Activated B cell treated with CpG ODN at 0.5 μM for 24 hours (primary cell): ENCODE measurements at regions of chr1 and their contacts with region 1.

Region 1: DNA sequence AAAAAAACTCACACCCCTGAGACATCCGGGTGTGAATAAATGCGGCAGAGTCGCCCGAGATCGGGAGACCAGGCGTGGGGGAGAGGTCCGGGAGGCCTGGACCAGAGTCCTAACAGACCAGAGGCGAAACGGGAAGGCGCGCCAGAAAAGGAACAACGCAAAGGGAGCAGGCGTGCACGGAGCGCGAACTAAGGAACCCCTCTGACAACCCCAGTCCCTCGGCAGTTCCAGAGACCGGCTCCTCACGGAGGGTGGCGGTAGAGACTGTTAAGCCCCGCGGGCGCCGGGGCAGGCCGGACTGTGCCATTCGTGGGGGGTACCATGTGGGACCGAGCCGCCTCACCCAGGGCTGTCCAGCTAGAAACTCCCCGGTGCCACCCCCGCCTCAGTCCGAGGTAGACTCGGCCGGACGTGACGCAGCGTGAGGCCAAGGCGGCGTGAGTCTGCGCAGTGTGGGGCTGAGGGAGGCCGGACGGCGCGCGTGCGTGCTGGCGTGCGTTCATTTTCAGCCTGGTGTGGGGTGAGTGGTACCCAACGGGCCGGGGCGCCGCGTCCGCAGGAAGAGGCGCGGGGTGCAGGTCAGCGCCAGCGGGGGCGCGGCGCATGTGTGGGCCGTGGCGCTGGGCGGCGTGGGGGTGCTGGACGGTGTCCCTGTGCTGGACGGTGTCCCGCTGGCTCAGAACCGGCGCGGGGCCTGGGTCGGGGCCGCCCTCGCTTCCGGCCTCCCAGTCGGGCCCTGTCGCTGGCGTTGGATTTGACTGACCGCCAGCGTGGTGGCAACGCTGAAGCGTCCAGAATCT is at the start of gene PARK7:
- DNase-seq: peak; percentile 100
- ATAC-seq: peak; percentile 97
- H3K4me3 Mint-ChIP-seq: peak within 1 kb of the TSS; percentile 94
- H3K27ac Mint-ChIP-seq: peak within 1 kb of the TSS; percentile 97
- H3K4me1 Mint-ChIP-seq: peaks cover 55% of the 10 kb centered on the region
- H3K27me3 Mint-ChIP-seq: no peaks in the 10 kb centered on the region
- CTCF ChIP-seq: no peak
- total RNA-seq, gene PARK7: 242 and 281 TPM in 2 replicates

Region 2: DNA sequence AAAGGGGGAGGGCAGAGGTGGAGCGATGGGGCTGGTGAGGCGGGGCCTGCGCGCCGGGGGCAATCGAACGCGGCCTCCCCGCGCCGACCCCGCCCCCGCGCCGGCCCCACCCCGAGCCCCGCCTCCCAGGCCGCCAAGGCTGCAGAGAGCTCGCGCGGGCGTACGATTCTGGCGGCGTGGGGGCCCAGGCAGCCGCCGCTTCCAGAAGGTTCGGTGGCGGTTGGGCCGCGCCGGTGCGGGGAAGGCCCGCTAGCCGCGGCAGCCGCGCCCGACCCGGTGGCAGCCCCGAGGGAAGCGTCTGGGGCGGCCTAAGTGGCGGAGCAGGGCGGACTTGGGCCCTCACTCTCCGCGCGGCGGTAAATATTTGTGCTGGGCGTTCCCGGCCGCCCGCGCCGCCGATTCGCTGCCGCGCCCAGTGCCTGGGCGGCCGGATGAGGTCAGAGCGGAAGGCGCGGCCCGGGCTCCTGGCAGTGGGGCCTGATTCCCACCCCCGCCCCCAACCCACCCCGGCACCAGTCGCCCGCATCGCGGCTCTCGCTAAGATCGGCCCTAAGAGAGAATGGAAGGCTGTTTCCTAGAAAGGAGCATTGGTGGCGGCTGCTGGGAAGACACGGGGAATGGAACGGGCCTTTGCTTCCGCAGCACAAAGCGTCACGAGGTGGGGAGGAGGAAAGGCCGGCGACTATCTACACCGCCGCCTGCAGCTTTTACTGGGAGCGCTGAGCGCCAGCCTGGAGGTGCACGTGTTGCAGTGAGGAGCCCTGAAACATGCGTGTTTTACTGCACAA is 1567.8 kb before region 1 on chr1 and contains the start of gene ACOT7:
- CTCF ChIA-PET with region 1: no interaction called
- POLR2A ChIA-PET with region 1: no interaction called
- intact Hi-C with region 1: loop called (anchors 5 kb)
- DNase-seq: peak; percentile 86
- ATAC-seq: peak; percentile 91
- H3K4me3 Mint-ChIP-seq: peak within 1 kb of the TSS; percentile 87
- H3K27ac Mint-ChIP-seq: peak within 1 kb of the TSS; percentile 93
- H3K4me1 Mint-ChIP-seq: peaks cover 22% of the 10 kb centered on the region
- H3K27me3 Mint-ChIP-seq: no peaks in the 10 kb centered on the region
- CTCF ChIP-seq: no peak
- total RNA-seq, gene ACOT7: 12.3 and 12.7 TPM in 2 replicates

Region 3: DNA sequence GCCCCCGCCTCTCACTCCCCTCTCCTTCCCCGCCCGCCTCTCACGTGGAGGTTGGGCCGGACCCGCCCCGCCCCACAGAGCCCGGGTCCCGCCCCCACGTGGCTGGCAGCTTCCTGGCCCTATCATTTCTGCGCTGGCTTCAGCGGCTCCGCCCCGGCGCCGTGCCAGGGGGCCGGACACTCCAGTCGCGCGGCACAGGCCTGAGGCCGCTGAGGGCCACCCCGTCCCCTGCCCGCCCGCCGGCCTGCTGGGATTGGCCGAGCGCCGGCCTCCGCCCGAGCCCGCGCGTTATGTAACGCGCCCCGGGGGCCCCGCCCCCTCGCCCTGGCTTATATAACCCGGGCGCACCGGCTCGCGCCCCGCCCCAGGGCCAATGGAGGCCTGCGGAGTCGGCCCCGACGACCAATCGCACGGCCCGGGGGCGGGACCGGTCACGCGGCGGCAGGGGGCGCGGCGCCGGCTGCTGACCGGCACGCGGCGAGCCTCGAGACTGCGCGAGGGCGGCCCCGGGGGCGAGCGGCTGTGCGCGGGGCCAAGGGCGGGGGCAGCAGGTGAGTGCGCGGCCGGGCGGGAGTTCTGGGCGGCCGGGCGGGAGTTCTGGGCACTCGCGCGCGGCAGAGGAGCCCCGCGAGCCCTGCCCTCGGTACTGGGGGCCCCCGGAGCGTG is 177.5 kb before region 1 on chr1 and contains the start of gene PER3:
- CTCF ChIA-PET with region 1: no interaction called
- POLR2A ChIA-PET with region 1: interaction called, 3 read pairs
- intact Hi-C with region 1: loop called (anchors 5 kb)
- DNase-seq: peak; percentile 95
- ATAC-seq: peak; percentile 92
- H3K4me3 Mint-ChIP-seq: peak within 1 kb of the TSS; percentile 80
- H3K27ac Mint-ChIP-seq: no peak within 1 kb of the TSS
- H3K4me1 Mint-ChIP-seq: peaks cover 26% of the 10 kb centered on the region
- H3K27me3 Mint-ChIP-seq: no peaks in the 10 kb centered on the region
- CTCF ChIP-seq: no peak
- total RNA-seq, gene PER3: 2.7 and 3.3 TPM in 2 replicates

Region 4: GRCh38 chr1:7902478-7903085 is 58.8 kb before region 1 on chr1:
- CTCF ChIA-PET with region 1: no interaction called
- POLR2A ChIA-PET with region 1: no interaction called
- intact Hi-C with region 1: no loop called
- DNase-seq: peak; percentile 42
- ATAC-seq: peak; percentile 82
- H3K4me3 Mint-ChIP-seq: peak overlapping the region; percentile 56
- H3K27ac Mint-ChIP-seq: no peak overlapping the region
- H3K4me1 Mint-ChIP-seq: peaks cover 4% of the 10 kb centered on the region
- H3K27me3 Mint-ChIP-seq: no peaks in the 10 kb centered on the region
- CTCF ChIP-seq: peak; percentile 54

Region 5: DNA sequence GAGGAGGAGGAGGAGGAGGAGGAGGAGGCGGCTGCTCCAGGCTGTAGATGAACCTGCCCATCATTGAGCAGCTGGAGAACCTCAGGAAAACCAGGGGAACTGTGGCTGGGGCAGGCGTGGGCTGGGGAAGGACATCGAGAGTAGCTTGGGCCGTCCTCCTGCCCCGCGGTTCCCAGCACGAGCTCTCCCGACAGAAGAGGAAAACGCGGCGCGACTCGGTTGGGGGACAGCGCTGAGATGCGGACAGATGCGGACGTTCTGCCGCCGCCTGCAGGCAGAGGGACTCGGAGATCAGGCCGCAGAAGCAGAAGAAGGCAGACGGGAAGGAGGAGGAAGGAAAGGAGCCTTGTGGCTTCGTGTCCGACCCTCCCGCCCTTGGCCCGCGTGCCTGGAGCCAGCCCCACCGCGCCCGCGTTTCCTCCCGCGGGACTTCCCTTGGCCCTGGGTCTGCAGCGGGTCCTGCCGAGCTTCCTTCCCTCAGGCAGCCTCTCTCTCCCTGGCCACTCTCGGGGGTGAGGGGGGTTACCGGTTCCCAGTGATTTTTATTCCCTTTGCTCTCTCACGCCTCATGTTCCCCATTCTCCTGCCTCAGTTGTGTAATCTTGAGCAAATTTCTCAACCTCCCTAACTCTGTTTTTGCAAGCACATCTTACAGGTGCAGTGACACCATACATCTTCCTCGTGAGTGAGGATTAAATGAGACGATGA is 19.0 kb before region 1 on chr1:
- CTCF ChIA-PET with region 1: no interaction called
- POLR2A ChIA-PET with region 1: interaction called, 16 read pairs
- intact Hi-C with region 1: loop called (anchors 1 kb)
- DNase-seq: peak; percentile 34
- ATAC-seq: peak; percentile 52
- H3K4me3 Mint-ChIP-seq: peak overlapping the region; percentile 61
- H3K27ac Mint-ChIP-seq: no peak overlapping the region
- H3K4me1 Mint-ChIP-seq: peaks cover 31% of the 10 kb centered on the region
- H3K27me3 Mint-ChIP-seq: peaks cover 27% of the 10 kb centered on the region
- CTCF ChIP-seq: no peak

Region 6: GRCh38 chr1:7991504-7992440 is 30.4 kb after region 1 on chr1:
- CTCF ChIA-PET with region 1: no interaction called
- POLR2A ChIA-PET with region 1: interaction called, 12 read pairs
- intact Hi-C with region 1: no loop called
- DNase-seq: no peak
- ATAC-seq: no peak
- H3K4me3 Mint-ChIP-seq: no peak overlapping the region
- H3K27ac Mint-ChIP-seq: no peak overlapping the region
- H3K4me1 Mint-ChIP-seq: peaks cover 12% of the 10 kb centered on the region
- H3K27me3 Mint-ChIP-seq: no peaks in the 10 kb centered on the region
- CTCF ChIP-seq: no peak